Endothelial cell of umbilical vein (primary cell): ENCODE measurements at regions of chr19 and their contacts with region 1.

Region 1: DNA sequence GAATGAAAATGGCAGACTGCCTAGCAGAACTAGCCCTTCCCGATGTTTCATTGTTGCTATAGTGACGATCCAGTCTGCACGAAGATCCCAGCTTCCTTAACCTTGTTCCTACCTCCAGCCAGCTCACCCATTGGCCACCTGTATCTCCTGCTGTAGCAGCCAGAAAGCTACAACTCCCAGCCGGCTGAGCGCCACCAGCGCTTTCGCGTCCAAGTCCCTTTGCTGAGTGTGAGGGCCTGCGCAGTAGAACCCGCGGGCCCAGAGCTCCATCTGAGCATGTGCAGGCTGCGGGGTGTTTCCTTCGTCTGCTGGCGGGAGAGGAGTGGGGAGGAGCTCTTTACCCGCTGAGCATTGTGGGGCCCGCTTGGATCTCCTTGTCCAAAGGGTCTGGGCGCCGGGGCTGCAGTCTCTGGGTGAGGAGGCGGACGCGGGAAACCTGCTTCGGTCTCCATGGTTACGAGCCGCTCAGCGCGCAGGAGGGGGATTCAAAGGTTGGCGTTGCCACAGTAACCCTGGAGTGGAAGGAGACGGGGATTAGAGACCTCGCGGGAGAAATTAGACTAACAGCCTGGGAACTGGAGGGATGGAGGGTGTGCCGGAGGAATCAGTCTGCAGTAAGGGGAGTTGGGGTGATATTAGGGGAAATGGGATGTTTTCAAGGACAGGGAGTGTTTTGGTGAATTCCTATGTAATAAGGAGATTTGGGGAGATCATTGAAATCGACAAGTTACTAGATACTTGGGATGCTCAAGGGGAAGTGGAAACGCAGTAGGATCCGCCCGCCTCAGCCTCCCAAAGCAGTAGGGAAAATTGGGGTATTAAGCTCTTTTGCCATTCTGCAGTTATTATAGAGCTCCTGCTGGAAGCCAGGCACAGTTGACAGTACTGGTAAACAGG is 33.5 kb downstream of the ZSWIM9 start:
- DNase-seq: peak; percentile 98
- H3K4me3 ChIP-seq: peak overlapping the region; percentile 35 to 90 (median 52)
- H3K27ac ChIP-seq: peak overlapping the region; percentile 64
- H3K4me1 ChIP-seq: peaks cover 21% of the 10 kb centered on the region
- H3K27me3 ChIP-seq: no peaks in the 10 kb centered on the region
- CTCF ChIP-seq: no peak
- POLR2A ChIP-seq: peak; percentile 38

Region 2: DNA sequence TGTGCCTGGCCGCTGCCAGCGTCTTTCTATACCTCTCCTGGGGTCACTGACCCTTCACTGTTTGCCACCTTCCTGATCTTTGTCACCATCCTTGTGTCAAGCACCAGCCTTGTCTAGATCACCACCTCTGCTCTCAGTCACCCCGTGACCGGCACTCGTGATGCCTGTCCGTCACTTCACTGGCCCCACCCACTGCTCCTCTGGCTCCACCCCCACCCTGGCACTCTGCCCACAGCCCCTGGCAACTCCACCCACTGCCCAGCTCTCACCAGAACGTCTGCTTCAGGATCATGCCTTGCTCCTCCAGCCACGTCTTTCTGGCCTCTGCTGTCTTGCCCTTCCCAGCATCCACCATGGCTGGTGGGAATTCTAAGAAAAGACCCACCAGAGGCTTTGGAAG is 68.6 kb before region 1 on chr19:
- CTCF ChIA-PET with region 1: no interaction called
- POLR2A ChIA-PET with region 1: no interaction called
- dilution Hi-C with region 1: no loop called
- intact Hi-C with region 1: no loop called
- DNase-seq: peak; percentile 17
- H3K4me3 ChIP-seq: no peak overlapping the region
- H3K27ac ChIP-seq: no peak overlapping the region
- H3K4me1 ChIP-seq: no peaks in the 10 kb centered on the region
- H3K27me3 ChIP-seq: no peaks in the 10 kb centered on the region
- CTCF ChIP-seq: no peak
- POLR2A ChIP-seq: no peak

Region 3: DNA sequence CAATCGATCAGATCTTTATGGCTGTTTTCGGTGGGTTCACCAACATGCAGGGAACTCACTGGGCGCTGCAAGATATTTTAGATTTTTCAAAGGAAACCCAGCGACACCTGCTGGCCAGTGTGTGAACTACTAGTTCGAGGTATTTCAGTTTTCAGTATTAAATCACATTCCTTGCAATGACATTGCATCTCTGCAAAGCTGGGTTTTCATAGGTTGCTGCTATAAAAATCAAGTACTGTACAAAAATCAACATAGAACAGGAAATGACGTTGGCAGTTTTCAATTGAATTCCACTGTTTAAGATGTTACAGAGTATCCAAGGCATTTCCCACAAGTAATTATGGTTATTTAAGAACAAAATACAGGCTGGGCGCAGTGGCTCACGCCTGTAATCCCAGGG is 51.4 kb before region 1 on chr19:
- CTCF ChIA-PET with region 1: interaction called, 9 read pairs
- POLR2A ChIA-PET with region 1: no interaction called
- dilution Hi-C with region 1: no loop called
- intact Hi-C with region 1: loop called (anchors 2 kb)
- DNase-seq: peak; percentile 98
- H3K4me3 ChIP-seq: no peak overlapping the region
- H3K27ac ChIP-seq: peak overlapping the region; percentile 94
- H3K4me1 ChIP-seq: peaks cover 15% of the 10 kb centered on the region
- H3K27me3 ChIP-seq: no peaks in the 10 kb centered on the region
- CTCF ChIP-seq: peak; percentile 65 to 67
- POLR2A ChIP-seq: peak; percentile 32

Region 4: GRCh38 chr19:48190288-48190884 is 13.6 kb before region 1 on chr19:
- CTCF ChIA-PET with region 1: interaction called, 23 read pairs
- POLR2A ChIA-PET with region 1: interaction called, 5 read pairs
- dilution Hi-C with region 1: no loop called
- intact Hi-C with region 1: no loop called
- DNase-seq: no peak
- H3K4me3 ChIP-seq: no peak overlapping the region
- H3K27ac ChIP-seq: no peak overlapping the region
- H3K4me1 ChIP-seq: no peaks in the 10 kb centered on the region
- H3K27me3 ChIP-seq: no peaks in the 10 kb centered on the region
- CTCF ChIP-seq: no peak
- POLR2A ChIP-seq: no peak

Region 5: DNA sequence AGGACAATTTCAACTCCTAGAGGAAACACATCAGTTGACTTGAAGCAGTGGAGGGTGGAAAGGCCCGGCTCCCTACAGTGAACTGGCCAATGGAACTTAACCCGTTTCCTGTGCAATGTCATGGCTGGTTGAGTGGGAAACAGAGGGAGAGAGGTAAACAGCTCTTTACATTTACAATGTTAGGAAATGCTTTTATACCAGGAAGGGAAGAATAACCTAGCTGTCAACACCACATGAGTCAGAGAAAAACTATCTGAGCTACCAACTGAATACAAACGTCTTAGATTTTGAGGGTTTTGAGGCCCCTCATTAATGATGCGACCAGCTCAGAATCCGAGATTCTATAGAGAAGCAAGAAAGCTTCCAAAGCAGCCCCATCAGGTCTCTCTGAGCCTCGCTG is 15.0 kb after region 1 on chr19:
- CTCF ChIA-PET with region 1: interaction called, 15 read pairs
- POLR2A ChIA-PET with region 1: interaction called, 3 read pairs
- dilution Hi-C with region 1: no loop called
- intact Hi-C with region 1: loop called (anchors 2 kb)
- DNase-seq: peak; percentile 65
- H3K4me3 ChIP-seq: no peak overlapping the region
- H3K27ac ChIP-seq: peak overlapping the region; percentile 63
- H3K4me1 ChIP-seq: peaks cover 19% of the 10 kb centered on the region
- H3K27me3 ChIP-seq: no peaks in the 10 kb centered on the region
- CTCF ChIP-seq: no peak
- POLR2A ChIP-seq: no peak

Region 6: DNA sequence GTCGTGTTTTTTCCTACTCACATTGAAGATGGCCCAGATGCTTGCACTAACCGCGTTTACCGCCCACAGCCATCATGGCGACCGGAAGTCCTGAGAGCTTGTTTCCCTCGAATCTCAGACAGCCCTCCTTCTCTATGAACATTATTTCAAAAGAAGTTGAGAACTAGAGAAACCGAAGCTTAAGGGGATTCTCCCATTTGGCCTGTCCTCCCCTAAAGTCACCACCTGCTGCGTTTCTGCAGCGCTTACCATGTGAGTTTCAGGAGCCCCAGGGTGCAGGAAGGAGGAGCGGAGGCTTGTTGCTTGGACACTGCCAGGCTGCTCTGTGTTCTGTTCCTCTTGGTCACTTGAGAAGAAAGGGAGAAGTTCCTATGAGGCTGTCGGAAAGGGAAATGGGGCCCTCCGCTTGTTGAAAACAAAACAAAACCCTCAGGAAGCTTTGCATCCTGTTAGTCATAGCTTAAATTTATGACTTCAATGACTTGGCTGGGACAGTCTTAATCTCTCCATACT is 45.6 kb after region 1 on chr19:
- CTCF ChIA-PET with region 1: interaction called, 6 read pairs
- POLR2A ChIA-PET with region 1: interaction called, 5 read pairs
- dilution Hi-C with region 1: no loop called
- intact Hi-C with region 1: loop called (anchors 2 kb)
- DNase-seq: peak; percentile 97
- H3K4me3 ChIP-seq: peak overlapping the region; percentile 10 to 60 (median 51)
- H3K27ac ChIP-seq: peak overlapping the region; percentile 80
- H3K4me1 ChIP-seq: peaks cover 63% of the 10 kb centered on the region
- H3K27me3 ChIP-seq: no peaks in the 10 kb centered on the region
- CTCF ChIP-seq: no peak
- POLR2A ChIP-seq: peak; percentile 96